WTC11 (cell line): ENCODE measurements at regions of chr13 and their contacts with region 1.

Region 1: GRCh38 chr13:98466634-98467236 is 110.2 kb downstream of the STK24 start:
- DNase-seq: peak; percentile 87
- ATAC-seq: peak; percentile 90
- H3K4me3 Mint-ChIP-seq: no peak overlapping the region
- H3K27ac Mint-ChIP-seq: no peak overlapping the region
- H3K4me1 Mint-ChIP-seq: peaks cover 18% of the 10 kb centered on the region
- H3K27me3 Mint-ChIP-seq: no peaks in the 10 kb centered on the region
- CTCF ChIP-seq: peak; percentile 74

Region 2: GRCh38 chr13:98411681-98412201 is 55.0 kb before region 1 on chr13:
- CTCF ChIA-PET with region 1: no interaction called
- POLR2A ChIA-PET with region 1: no interaction called
- DNase-seq: no peak
- ATAC-seq: no peak
- H3K4me3 Mint-ChIP-seq: no peak overlapping the region
- H3K27ac Mint-ChIP-seq: peak overlapping the region; percentile 5; the same call in 1 of the 2 replicates
- H3K4me1 Mint-ChIP-seq: no peaks in the 10 kb centered on the region
- H3K27me3 Mint-ChIP-seq: no peaks in the 10 kb centered on the region
- CTCF ChIP-seq: no peak

Region 3: DNA sequence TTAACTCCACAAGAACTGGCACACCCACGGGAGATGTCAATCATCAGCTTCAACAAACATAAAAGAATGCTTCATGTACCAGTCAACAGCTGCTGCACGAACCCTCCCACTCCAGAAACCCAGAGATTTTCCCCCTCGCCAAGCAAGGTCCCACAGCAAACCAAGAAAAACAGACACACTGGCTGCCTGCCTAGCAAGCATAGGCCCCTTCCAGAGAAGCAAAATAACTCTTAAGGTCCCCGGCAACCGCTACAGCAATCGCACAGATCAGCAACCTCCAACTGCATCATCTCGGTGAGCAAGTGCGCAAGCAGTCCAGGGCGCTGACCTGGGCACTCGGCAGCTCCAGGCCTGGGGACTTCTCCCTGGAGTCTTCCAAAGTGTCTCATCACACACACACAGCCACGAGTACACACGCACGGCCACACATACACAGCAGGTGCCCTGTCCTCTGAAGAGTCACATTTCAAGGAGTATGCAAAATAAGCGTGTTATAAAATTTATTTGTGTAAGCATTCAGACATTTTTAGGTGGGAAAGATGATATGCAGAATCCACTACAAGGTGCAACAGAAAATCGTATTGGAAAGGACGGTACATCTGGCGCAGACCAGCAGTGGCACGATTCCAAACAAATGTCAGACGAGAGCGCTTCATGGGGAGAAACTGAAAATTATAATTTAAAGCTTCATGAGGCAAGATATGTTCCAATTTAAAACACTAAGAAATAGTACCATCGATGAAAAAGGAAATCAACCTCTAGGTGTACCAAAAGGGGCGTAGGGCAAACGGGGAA is 14.9 kb before region 1 on chr13:
- CTCF ChIA-PET with region 1: interaction called, 30 read pairs
- POLR2A ChIA-PET with region 1: no interaction called
- DNase-seq: no peak
- ATAC-seq: no peak
- H3K4me3 Mint-ChIP-seq: no peak overlapping the region
- H3K27ac Mint-ChIP-seq: peak overlapping the region; percentile 28
- H3K4me1 Mint-ChIP-seq: peaks cover 28% of the 10 kb centered on the region
- H3K27me3 Mint-ChIP-seq: no peaks in the 10 kb centered on the region
- CTCF ChIP-seq: no peak

Region 4: GRCh38 chr13:98681049-98681448 is 214.3 kb after region 1 on chr13:
- CTCF ChIA-PET with region 1: no interaction called
- POLR2A ChIA-PET with region 1: no interaction called
- DNase-seq: no peak
- ATAC-seq: no peak
- H3K4me3 Mint-ChIP-seq: no peak overlapping the region
- H3K27ac Mint-ChIP-seq: no peak overlapping the region
- H3K4me1 Mint-ChIP-seq: peaks cover 36% of the 10 kb centered on the region
- H3K27me3 Mint-ChIP-seq: no peaks in the 10 kb centered on the region
- CTCF ChIP-seq: no peak